Motor neuron (in vitro differentiated cells): ENCODE measurements at regions of chr3 and their contacts with region 1.

Region 1: GRCh38 chr3:168511428-168512014 is 415.8 kb upstream of the GOLIM4 start:
- ATAC-seq: peak in 2 of 8 experiments; percentile 24 to 30
- H3K4me3 ChIP-seq: no peak overlapping the region
- H3K27ac ChIP-seq: no peak overlapping the region
- H3K4me1 ChIP-seq: peaks cover 3 to 6% of the 10 kb centered on the region in 2 donors

Region 2: DNA sequence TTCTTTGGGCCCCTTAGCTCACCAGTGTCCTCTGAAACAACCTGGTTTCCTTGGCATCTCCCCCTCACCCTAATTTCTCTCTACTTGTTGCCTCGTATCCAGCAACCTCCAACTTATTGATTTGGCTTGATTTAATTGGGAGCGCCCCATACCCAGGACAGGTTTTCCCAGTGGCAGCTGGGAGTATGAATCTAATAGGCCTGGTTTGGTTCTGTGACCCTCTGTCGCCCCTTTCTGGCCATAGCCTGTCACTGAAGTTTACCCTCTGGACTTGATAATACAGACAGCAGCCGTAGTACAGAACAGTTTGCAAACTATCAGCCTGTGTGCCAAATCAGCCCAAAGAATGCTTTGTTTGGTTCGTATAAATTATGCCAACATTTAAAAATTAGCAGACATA is 109.3 kb after region 1 on chr3:
- in situ Hi-C with region 1: loop called in 1 of 9 experiments (anchors 25 kb)
- ATAC-seq: peak in 7 of 8 experiments; percentile 45 to 79 (median 60)
- H3K4me3 ChIP-seq: no peak overlapping the region
- H3K27ac ChIP-seq: no peak overlapping the region
- H3K4me1 ChIP-seq: peaks cover 30 to 42% of the 10 kb centered on the region in 2 donors

Region 3: DNA sequence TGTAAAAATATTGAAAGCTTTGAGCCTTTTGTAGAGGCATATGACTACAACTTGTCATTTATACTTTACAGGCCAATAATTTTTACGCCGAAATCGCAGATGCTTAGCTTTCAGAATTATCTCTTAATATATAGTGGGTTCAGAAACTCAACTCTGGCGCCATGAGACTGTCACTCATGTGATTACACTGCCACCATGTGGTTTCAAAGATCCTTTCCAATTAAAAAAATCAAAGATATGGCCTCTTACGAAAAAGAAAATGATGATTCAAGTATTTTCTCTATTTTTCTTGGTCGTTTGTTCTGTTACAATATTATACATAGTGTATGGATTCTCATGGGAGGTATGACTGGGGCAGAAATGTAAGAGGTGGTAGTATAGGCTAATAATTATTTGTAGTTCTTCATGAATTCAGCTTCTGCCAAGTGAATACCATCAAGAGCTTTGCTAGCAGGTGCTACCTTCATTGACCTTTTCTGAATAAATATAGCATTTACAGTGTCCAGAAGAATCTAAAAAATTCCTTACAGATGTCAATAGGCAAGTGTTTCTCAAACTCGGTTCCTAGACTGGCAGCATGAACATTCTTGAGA is 335.9 kb after region 1 on chr3:
- in situ Hi-C with region 1: loop called in 3 of 9 experiments (anchors 25 kb)
- ATAC-seq: peak in 6 of 8 experiments; percentile 40 to 70 (median 55)
- H3K4me3 ChIP-seq: no peak overlapping the region
- H3K27ac ChIP-seq: no peak overlapping the region
- H3K4me1 ChIP-seq: peaks cover 5 to 11% of the 10 kb centered on the region in 2 donors